A549 (cell line): ENCODE measurements at regions of chr19 and their contacts with region 1.

Region 1: GRCh38 chr19:3700221-3701032 is at the start of gene PIP5K1C:
- DNase-seq: peak; percentile 33 to 83
- ATAC-seq: peak; percentile 85 to 89
- H3K4me3 ChIP-seq: peak within 1 kb of the TSS; percentile 95
- H3K27ac ChIP-seq: peak within 1 kb of the TSS; percentile 86 to 98
- H3K4me1 ChIP-seq: peaks cover 4% of the 10 kb centered on the region; the same call in 1 of the 3 replicates
- CTCF ChIP-seq: peak; percentile 66
- EP300 ChIP-seq: no peak
- POLR2A ChIP-seq: peak; percentile 41
- RAD21 ChIP-seq: peak; percentile 47 to 49
- polyA plus RNA-seq, gene PIP5K1C: 2.6 and 3.5 TPM in 2 replicates

Region 2: GRCh38 chr19:2154587-2155075 is 1545.8 kb before region 1 on chr19:
- CTCF ChIA-PET with region 1: no interaction called
- POLR2A ChIA-PET with region 1: no interaction called
- DNase-seq: no peak
- ATAC-seq: no peak
- H3K4me3 ChIP-seq: no peak overlapping the region
- H3K27ac ChIP-seq: peak overlapping the region in 1 of 2 experiments; percentile 6; a peak in 1 of 6 replicates
- H3K4me1 ChIP-seq: peaks cover 11% of the 10 kb centered on the region; the same call in 2 of the 3 replicates
- CTCF ChIP-seq: no peak
- EP300 ChIP-seq: no peak
- POLR2A ChIP-seq: no peak
- RAD21 ChIP-seq: no peak

Region 3: GRCh38 chr19:3665681-3666544 is 34.5 kb before region 1 on chr19:
- CTCF ChIA-PET with region 1: interaction called, 18 read pairs
- POLR2A ChIA-PET with region 1: no interaction called
- DNase-seq: peak in 1 of 2 experiments; percentile 57
- ATAC-seq: peak; percentile 67 to 81; a peak in 5 of 6 replicates
- H3K4me3 ChIP-seq: no peak overlapping the region
- H3K27ac ChIP-seq: no peak overlapping the region
- H3K4me1 ChIP-seq: peaks cover 13% of the 10 kb centered on the region
- CTCF ChIP-seq: peak; percentile 74
- EP300 ChIP-seq: no peak
- POLR2A ChIP-seq: no peak
- RAD21 ChIP-seq: peak; percentile 78 to 83